ENCODE measurements at regions of chr1 and their contacts with region 1.

Region 1: GRCh38 chr1:8560611-8561544 is 243.0 kb downstream of the SLC45A1 start:
- DNase-seq: peak; percentile 48
- ATAC-seq: peak; percentile 28
- H3K4me3 Mint-ChIP-seq: no peak overlapping the region
- H3K27ac Mint-ChIP-seq: no peak overlapping the region
- H3K4me1 Mint-ChIP-seq: peaks cover 16% of the 10 kb centered on the region
- H3K27me3 Mint-ChIP-seq: no peaks in the 10 kb centered on the region

Region 2: DNA sequence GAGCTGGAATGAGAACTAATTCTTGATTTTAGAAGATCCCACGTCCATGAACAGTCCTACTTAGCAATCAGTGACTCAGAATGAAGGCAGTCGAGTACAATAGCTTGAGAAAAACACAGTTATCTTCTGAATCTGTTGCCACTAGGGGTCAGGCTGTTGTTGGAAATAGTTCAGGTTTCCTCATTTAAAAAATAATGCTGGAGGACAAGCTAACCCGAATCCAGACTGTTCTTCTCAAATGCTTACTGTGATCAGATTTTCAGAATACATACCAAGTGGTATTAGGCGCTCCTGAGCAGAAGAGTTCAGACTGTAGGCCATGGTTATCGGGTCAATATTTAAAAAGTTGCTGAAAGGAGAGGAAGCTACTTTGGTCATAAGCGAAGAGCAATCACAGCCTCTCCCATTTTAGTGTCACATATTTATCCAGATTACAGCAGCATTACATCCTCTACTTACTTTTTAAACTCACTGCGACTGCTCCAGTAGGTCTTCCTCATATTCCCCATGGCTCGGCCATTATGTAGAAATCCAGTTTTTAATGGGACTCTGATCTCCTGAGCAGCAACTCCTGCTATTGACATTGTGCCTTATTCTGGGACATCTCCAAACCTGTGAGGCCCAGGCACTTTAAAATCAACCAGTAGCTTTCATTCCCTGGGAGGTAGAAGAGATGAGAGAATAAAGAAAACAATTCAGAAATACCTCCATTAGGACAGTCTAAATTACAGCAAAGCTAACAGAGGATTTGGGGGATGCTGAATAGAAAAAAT is 545.7 kb before region 1 on chr1:
- CTCF ChIA-PET with region 1: no interaction called
- POLR2A ChIA-PET with region 1: no interaction called
- DNase-seq: peak; percentile 62
- ATAC-seq: peak; percentile 65
- H3K4me3 Mint-ChIP-seq: no peak overlapping the region
- H3K27ac Mint-ChIP-seq: no peak overlapping the region
- H3K4me1 Mint-ChIP-seq: no peaks in the 10 kb centered on the region
- H3K27me3 Mint-ChIP-seq: peaks cover 19% of the 10 kb centered on the region

Region 3: DNA sequence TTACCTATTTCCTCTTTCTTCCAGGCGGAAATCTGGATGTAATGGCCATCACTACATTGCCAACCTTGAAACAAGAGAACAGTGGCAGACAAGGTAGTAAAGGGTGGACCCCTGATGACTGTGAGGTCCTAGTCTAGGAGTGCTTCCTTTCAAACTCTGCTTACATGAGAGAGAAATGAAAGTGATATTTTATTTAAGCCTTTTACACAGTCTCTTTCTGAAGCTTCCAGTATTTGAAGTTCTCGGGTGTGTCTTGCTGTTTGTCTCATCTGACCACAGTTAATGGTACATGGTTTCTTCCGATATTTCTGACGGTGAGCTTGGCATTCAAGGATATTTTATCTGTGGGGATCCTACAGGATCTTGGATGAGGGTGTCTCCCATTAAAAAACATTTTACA is 27.8 kb before region 1 on chr1:
- CTCF ChIA-PET with region 1: interaction called, 13 read pairs
- POLR2A ChIA-PET with region 1: no interaction called
- DNase-seq: no peak
- ATAC-seq: peak; percentile 82
- H3K4me3 Mint-ChIP-seq: peak overlapping the region; percentile 50
- H3K27ac Mint-ChIP-seq: peak overlapping the region; percentile 75
- H3K4me1 Mint-ChIP-seq: peaks cover 18% of the 10 kb centered on the region
- H3K27me3 Mint-ChIP-seq: no peaks in the 10 kb centered on the region

Region 4: GRCh38 chr1:8604041-8604945 is 43.4 kb after region 1 on chr1:
- CTCF ChIA-PET with region 1: interaction called, 21 read pairs
- POLR2A ChIA-PET with region 1: interaction called, 3 read pairs
- DNase-seq: peak; percentile 68
- ATAC-seq: peak; percentile 88
- H3K4me3 Mint-ChIP-seq: peak overlapping the region; percentile 70
- H3K27ac Mint-ChIP-seq: peak overlapping the region; percentile 91
- H3K4me1 Mint-ChIP-seq: peaks cover 37% of the 10 kb centered on the region
- H3K27me3 Mint-ChIP-seq: no peaks in the 10 kb centered on the region

Region 5: GRCh38 chr1:8671306-8671917 is 110.5 kb after region 1 on chr1:
- CTCF ChIA-PET with region 1: interaction called, 128 read pairs
- POLR2A ChIA-PET with region 1: no interaction called
- DNase-seq: peak; percentile 41
- ATAC-seq: no peak
- H3K4me3 Mint-ChIP-seq: no peak overlapping the region
- H3K27ac Mint-ChIP-seq: no peak overlapping the region
- H3K4me1 Mint-ChIP-seq: peaks cover 26% of the 10 kb centered on the region
- H3K27me3 Mint-ChIP-seq: no peaks in the 10 kb centered on the region

Region 6: GRCh38 chr1:8848663-8849386 is 287.9 kb after region 1 on chr1:
- CTCF ChIA-PET with region 1: interaction called, 43 read pairs
- POLR2A ChIA-PET with region 1: no interaction called
- DNase-seq: peak; percentile 80
- ATAC-seq: peak; percentile 96
- H3K4me3 Mint-ChIP-seq: no peak overlapping the region
- H3K27ac Mint-ChIP-seq: no peak overlapping the region
- H3K4me1 Mint-ChIP-seq: peaks cover 12% of the 10 kb centered on the region
- H3K27me3 Mint-ChIP-seq: peaks cover 2% of the 10 kb centered on the region

Measured in activated CD8-positive, alpha-beta T cell treated with anti-CD3 and anti-CD28 coated beads, Interleukin-2, amount 10 ng/mL, durations not matched to agents 7 days and 5 days (primary cell).